HEK293T (cell line): ENCODE measurements at regions of chr16 and their contacts with region 1.

Region 1: DNA sequence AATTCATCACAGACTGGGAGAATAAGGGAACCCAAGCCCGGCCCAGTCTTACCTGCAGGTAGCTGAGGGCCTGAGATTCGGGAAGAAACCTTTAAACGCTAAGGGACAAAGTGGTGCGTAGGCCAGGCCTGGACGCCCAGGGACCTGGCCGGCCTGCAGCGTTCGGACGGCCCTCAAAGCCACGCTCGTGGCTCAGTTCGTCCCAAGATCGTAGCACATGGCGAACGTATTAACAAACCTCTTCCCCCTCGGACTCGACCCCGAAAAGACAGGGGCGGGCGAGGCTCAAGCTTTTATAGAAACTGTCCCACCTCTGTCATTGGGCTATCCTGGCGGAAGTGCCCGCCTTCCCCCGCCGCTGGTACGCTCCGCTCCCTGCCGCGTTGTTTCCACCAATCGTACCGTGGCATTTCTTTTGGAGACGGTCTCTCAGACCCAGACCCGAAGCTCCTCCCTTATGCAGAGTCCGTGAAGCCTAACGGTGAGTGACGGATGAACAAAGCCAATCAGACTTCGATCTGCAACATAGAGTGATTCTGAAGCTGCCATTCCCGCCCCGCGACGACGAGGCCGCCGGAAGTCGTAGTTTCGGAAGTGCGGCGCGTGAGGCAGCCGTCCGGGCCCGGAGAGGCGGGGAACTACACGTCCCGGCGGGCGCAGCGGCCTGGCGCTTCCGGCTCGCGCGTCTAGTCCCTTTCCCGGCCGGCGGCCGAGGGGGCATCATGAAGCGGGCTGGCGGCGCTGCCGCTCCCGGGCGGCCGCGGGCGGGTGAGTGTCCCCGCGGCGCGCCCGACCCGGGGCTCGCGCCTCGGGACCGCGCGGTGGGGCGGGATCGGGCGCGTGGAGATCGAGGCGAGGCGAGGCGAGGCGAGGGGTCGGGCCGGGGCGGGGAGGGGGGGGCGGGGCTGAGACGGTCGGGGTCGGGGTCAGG is at the start of gene TRAF7:
- DNase-seq: peak; percentile 96

Region 2: GRCh38 chr16:2047330-2048115 is 107.8 kb before region 1 on chr16 and contains the starts of genes NTHL1 and TSC2:
- CTCF ChIA-PET with region 1: no interaction called
- POLR2A ChIA-PET with region 1: interaction called, 13 read pairs
- DNase-seq: peak; percentile 100

Region 3: GRCh38 chr16:2142942-2143877 is 12.1 kb before region 1 on chr16:
- CTCF ChIA-PET with region 1: interaction called, 6 read pairs
- POLR2A ChIA-PET with region 1: interaction called, 40 read pairs
- DNase-seq: no peak

Region 4: DNA sequence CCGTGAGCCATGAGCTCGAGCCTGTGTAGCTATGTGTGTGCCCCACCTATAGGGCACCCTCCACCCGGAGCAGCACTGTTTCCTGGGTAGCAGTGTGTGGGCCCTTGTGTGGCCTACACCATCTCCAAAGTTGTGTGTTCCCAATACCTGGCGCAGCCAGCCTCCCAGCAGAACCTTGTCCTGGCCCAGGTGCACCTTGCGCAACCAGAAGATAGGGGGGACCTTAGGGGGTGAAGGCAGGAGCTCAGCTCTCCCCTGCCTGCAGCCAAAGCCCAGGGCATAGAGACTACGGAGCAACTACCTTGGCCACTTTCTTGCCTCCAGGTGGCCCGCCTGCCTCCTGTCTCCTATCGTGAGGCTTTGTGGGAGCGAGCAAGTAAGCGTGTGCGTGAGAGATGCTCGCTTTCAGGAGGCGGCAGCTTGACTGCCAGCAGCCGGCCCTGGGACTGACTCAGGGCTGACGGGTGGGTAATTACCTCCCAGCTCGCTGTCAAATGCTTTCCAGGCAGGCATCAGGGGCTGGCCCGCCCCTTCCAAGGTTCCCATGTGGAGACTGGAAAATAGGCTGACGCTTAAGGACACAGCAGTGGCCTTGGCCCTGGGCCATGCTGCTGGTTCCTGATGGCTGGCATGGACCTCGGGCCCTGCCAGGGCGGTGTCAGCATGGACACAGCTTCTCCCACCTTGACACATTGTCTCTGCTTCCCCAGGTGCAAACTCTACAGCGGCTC is 19.2 kb after region 1 on chr16:
- CTCF ChIA-PET with region 1: no interaction called
- POLR2A ChIA-PET with region 1: interaction called, 27 read pairs
- DNase-seq: no peak

Region 5: GRCh38 chr16:2205104-2205966 is 50.0 kb after region 1 on chr16 and contains the start of gene MLST8:
- CTCF ChIA-PET with region 1: no interaction called
- POLR2A ChIA-PET with region 1: interaction called, 12 read pairs
- DNase-seq: peak; percentile 96

Region 6: DNA sequence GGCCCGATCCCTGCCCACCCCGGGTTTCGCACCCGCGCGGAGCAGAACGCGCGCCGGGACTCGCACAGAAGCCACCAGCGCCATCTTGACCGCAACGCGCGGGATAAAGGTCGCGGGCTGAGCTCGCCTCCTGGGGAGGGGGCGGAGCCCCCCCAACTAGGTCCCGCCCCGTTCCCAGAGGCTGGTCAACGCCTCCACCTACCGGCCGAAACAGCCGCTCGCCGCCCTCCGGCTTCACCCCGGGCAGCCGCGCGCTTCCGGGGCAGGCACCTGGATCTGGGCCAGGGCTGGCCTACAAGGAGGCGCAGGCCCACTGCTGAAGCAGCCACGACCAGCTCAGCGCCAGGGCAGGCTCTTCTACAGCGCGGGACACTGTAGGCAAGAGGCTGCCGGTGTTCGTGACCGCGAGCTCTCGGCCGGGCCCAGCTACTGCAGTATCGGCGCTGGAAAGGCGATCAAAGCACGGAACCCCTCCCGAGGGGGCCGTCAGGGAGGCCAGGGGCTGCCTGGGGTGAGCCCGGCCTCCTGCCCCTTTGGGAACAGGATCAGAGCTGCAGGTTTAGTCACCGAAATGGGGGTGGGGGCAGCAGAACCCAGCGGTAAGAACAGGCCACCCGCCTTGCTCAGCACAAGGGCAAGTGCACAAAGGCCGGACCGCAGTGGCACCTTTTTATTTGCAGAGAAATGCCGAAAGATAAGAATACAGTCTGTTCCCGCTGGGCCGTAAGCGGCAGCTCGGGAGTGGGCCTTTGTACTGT is 96.3 kb after region 1 on chr16 and contains the start of gene ECI1:
- CTCF ChIA-PET with region 1: interaction called, 4 read pairs
- POLR2A ChIA-PET with region 1: interaction called, 24 read pairs
- DNase-seq: peak; percentile 96